A673 (cell line): ENCODE measurements at regions of chr18 and their contacts with region 1.

Region 1: DNA sequence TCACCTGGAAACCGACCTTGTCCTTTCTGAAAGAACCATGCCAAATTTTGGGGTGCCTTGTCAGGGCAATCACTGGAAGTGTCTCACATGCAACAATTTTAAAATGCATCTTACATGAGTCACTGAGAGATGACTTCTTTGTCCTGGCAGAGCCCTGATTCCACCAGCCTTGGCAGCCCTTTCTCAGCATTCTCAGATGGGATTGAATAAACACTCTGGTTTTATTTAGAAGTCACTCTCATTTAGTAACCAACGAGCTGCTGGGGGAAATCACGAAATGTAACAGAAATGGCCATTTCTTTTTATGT is 3.8 kb upstream of the ATP8B1 start:
- DNase-seq: peak; percentile 50
- H3K4me3 ChIP-seq: no peak overlapping the region
- H3K27ac ChIP-seq: peak overlapping the region; percentile 57
- H3K4me1 ChIP-seq: peaks cover 34% of the 10 kb centered on the region
- H3K27me3 ChIP-seq: no peaks in the 10 kb centered on the region
- CTCF ChIP-seq: no peak

Region 2: DNA sequence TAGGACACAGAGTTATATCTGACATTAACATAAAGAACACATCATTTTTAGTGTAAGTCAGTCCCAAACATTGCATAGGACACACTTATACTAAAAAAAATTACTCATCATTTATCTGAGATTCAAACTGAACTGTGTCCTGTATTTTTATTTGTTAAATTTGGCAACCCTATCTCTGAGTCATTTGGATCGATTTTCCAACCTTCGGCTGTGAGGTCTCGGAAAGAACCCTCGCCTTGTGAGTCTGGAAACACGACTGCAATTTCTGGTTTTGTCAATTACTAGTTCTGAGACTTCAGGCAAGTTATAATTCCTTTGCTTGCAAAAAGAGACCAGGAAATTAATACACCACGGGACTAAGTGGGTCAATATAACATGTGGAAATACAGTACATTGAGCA is 17.8 kb before region 1 on chr18:
- CTCF ChIA-PET with region 1: no interaction called
- POLR2A ChIA-PET with region 1: no interaction called
- intact Hi-C with region 1: loop called (anchors 2 kb)
- DNase-seq: no peak
- H3K4me3 ChIP-seq: peak overlapping the region; percentile 18
- H3K27ac ChIP-seq: peak overlapping the region; percentile 97
- H3K4me1 ChIP-seq: peaks cover 75% of the 10 kb centered on the region
- H3K27me3 ChIP-seq: no peaks in the 10 kb centered on the region
- CTCF ChIP-seq: no peak